Activated T-helper 1 cell treated with anti-CD3 and anti-CD28 coated beads, Interleukin-12 subunit alpha, Interleukin-12 subunit beta, Interleukin-2, Interleukin-4 antibody, amounts not matched to agents 30 ng/mL and 10 ng/mL and 1 ng/mL, durations not matched to agents 14 hours and 24 hours and 36 hours (primary cell): ENCODE measurements at regions of chr4 and their contacts with region 1.

Region 1: DNA sequence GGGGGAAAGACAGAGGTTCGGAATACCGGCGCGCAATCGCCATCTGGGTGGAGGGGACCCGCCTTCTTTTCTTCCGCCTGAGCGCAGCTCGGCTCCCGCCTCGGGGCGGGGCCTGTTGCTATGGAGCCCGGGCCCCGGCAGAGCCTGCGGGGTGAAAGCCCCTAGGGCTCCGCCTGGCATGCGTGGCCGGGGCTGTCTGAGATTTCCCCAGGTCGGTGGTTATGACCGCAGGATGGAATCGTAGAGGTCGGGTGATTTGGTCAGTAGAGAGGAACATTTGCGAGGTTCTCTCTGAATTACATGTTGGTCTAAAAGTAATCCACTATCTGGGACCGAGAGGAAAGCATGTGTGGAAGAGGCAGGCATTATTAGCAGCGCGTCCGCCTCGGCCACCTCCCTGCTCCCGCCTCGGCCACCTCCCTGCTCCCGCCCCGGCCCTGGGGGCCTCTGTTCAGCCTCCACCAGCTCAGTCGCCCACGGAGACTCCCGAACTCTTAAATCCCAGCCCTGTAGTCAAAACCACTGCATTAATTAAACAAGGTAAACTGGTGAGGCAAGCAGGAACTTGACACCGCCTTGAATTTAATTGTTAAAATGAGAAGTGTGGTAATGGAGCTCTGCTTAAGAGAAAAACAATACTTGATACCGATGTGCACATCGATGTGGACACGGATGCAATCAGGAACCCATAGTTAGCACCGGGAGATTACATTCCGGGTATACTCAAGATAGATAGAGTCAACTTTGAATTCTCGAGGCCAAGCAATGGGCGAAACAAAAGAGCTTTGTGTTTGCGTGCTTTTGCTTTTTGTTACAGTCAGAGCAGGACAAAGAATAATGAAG is 45.2 kb downstream of the TRIM2 start:
- DNase-seq: peak; percentile 79
- H3K4me3 Mint-ChIP-seq: peak overlapping the region; percentile 86
- H3K27ac Mint-ChIP-seq: peak overlapping the region; percentile 71
- H3K4me1 Mint-ChIP-seq: peaks cover 23% of the 10 kb centered on the region
- H3K27me3 Mint-ChIP-seq: peaks cover 11% of the 10 kb centered on the region

Region 2: DNA sequence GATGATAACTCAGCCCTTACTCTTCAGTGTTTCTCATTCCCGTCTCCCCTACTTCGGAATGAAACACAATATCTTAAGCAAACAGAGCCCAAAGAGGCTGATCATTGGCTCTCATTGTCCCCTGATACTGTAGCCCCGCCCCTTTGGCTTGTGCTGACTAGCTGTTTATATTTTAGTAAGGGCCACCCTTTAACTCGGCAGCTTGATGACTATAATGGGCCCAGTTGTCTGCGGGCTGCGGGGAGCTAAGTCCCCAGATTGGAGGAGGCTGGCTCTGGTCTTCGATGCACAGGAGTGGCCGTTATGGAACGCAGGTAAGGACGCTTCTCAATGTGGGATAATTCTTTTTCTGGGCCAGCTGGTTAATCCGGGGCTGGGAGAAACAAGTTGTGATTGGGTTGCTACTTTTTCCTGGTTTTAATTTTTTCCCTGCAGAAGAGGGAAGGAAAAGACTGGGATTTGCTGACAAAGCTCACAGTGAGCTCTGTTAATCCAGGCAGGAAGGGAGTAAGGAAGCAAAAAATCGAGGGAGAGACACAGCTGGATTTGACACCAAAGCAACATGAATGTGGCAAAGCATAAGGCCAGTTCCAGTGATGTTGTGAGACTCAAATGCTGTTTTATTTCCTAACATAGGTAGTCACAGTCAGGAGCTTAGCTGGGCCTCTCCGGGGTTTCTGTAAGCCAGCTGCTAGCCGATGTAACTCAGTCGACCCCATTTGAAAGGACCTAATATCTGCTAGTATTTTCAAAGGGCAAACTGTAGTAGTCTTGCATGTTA is 45.0 kb before region 1 on chr4 and contains the start of gene TRIM2:
- intact Hi-C with region 1: loop called (anchors 5 kb)
- DNase-seq: no peak
- H3K4me3 Mint-ChIP-seq: peak within 1 kb of the TSS; percentile 15
- H3K27ac Mint-ChIP-seq: peak within 1 kb of the TSS; percentile 18
- H3K4me1 Mint-ChIP-seq: peaks cover 17% of the 10 kb centered on the region
- H3K27me3 Mint-ChIP-seq: no peaks in the 10 kb centered on the region
- total RNA-seq, gene TRIM2: 0.16 and 0.24 TPM in 2 replicates

Region 3: GRCh38 chr4:153221783-153222706 is 27.4 kb before region 1 on chr4:
- intact Hi-C with region 1: loop called (anchors 1 kb)
- DNase-seq: no peak
- H3K4me3 Mint-ChIP-seq: peak overlapping the region; percentile 77
- H3K27ac Mint-ChIP-seq: no peak overlapping the region
- H3K4me1 Mint-ChIP-seq: peaks cover 30% of the 10 kb centered on the region
- H3K27me3 Mint-ChIP-seq: peaks cover 44% of the 10 kb centered on the region

Region 4: GRCh38 chr4:153466081-153466948 is 216.9 kb after region 1 on chr4 and contains the start of gene TMEM131L:
- intact Hi-C with region 1: loop called (anchors 5 kb)
- DNase-seq: peak; percentile 63
- H3K4me3 Mint-ChIP-seq: peak within 1 kb of the TSS; percentile 89
- H3K27ac Mint-ChIP-seq: peak within 1 kb of the TSS; percentile 90
- H3K4me1 Mint-ChIP-seq: peaks cover 50% of the 10 kb centered on the region
- H3K27me3 Mint-ChIP-seq: no peaks in the 10 kb centered on the region
- total RNA-seq, gene TMEM131L: 39.5 and 42.2 TPM in 2 replicates